IMR-90 (cell line): ENCODE measurements at regions of chr18 and their contacts with region 1.

Region 1: GRCh38 chr18:34787931-34788532 is 77.9 kb downstream of the DTNA start:
- DNase-seq: peak; percentile 69
- ATAC-seq: peak; percentile 64; the same call in 1 of the 2 replicates
- H3K4me3 ChIP-seq: no peak overlapping the region
- H3K27ac ChIP-seq: no peak overlapping the region
- H3K4me1 ChIP-seq: peaks cover 7% of the 10 kb centered on the region; the same call in 1 of the 2 replicates
- H3K27me3 ChIP-seq: no peaks in the 10 kb centered on the region
- CTCF ChIP-seq: peak; percentile 74
- POLR2A ChIP-seq: no peak
- RAD21 ChIP-seq: peak; percentile 90

Region 2: DNA sequence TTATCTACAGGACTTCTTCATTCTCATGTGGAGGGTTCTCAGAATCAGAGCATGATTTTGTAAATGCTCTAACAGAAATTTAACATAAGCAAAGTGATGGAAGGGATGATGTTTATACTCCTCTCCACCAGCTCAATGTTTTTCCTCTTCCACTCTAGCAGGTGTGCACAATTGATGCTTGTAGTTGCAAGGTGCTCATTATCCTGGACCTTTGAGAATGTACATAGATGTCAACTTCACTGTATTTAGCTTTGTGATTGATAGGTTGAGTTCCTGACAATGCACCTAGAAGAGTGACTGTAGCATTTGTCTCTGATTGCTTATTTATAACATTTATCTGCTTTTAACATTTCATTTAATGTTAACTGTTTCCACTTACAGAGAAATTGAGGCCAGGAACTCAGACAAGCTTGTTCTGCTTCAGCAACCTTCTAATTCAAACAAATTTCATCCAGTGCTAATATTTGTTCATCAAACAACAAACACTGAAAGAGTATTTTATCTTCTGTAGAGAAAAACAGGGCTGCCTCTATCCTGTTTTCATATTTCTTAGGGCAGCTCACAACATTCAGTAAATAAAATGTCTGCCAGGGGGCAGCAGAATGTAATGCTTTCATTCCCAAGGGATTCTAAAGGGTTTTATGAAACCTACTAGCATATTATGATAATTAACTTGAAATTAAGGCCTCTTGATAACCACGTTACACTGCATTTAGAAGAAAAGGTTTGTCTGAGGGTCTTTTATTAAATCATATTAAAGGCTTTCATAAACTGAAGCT is 435.5 kb before region 1 on chr18:
- CTCF ChIA-PET with region 1: no interaction called
- POLR2A ChIA-PET with region 1: no interaction called
- dilution Hi-C with region 1: no loop called
- in situ Hi-C with region 1: no loop called
- intact Hi-C with region 1: loop called (anchors 5 kb)
- DNase-seq: no peak
- ATAC-seq: no peak
- H3K4me3 ChIP-seq: no peak overlapping the region
- H3K27ac ChIP-seq: no peak overlapping the region
- H3K4me1 ChIP-seq: no peaks in the 10 kb centered on the region
- H3K27me3 ChIP-seq: no peaks in the 10 kb centered on the region
- CTCF ChIP-seq: 0 out of 2 replicates have a peak, but pooled peaks have one; percentile 8
- POLR2A ChIP-seq: no peak
- RAD21 ChIP-seq: no peak

Region 3: DNA sequence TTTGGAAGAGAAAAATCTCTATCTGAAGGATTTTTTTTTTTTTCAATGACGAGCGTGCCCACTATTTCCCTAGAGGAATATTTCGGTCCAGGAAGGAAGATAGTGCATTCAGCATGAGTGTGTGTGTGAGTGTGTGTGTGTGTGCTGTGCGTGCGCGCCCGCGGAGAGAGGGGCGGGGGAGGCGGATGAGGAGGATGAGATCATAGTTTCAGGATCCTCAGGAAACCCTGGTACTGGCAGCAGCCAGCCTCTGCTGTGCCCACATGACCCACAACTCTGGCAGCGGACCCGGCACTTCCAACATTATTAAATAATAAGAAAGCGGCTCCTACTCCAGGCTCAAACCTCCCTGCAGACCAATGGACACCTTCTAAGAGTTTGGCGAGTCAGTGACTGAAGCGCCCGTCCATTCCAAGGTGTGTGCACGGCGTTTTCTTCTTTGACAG is 294.9 kb before region 1 on chr18:
- CTCF ChIA-PET with region 1: no interaction called
- POLR2A ChIA-PET with region 1: no interaction called
- dilution Hi-C with region 1: no loop called
- in situ Hi-C with region 1: no loop called
- intact Hi-C with region 1: loop called (anchors 5 kb)
- DNase-seq: peak; percentile 58
- ATAC-seq: peak; percentile 87
- H3K4me3 ChIP-seq: peak overlapping the region; percentile 44
- H3K27ac ChIP-seq: no peak overlapping the region
- H3K4me1 ChIP-seq: no peaks in the 10 kb centered on the region
- H3K27me3 ChIP-seq: peaks cover 11% of the 10 kb centered on the region
- CTCF ChIP-seq: no peak
- POLR2A ChIP-seq: no peak
- RAD21 ChIP-seq: no peak

Region 4: DNA sequence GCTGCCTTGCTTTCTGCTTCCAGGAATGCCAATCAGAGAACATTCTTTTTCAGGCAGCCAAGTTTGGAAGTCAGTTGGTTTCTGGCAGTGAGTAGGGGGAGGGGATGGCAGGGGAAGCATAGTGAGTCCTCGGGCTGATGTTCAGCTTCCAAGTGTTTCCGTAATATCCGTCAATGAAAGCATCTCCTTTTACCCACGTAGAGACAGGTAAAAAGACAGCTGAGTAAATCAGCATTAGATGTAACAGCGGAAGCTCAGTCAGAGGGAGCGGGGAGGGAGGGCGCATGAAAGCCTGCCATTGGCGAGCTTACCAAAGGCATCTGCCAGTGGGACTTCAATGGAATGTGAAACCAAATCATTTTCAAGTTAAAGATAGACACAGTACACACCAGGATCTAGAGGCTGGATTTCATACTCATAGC is 195.1 kb before region 1 on chr18:
- CTCF ChIA-PET with region 1: interaction called, 3 read pairs
- POLR2A ChIA-PET with region 1: no interaction called
- dilution Hi-C with region 1: no loop called
- in situ Hi-C with region 1: no loop called
- intact Hi-C with region 1: loop called (anchors 1 kb)
- DNase-seq: peak; percentile 59
- ATAC-seq: peak; percentile 98
- H3K4me3 ChIP-seq: peak overlapping the region; percentile 40
- H3K27ac ChIP-seq: peak overlapping the region; percentile 12; the same call in 1 of the 2 replicates
- H3K4me1 ChIP-seq: peaks cover 4% of the 10 kb centered on the region
- H3K27me3 ChIP-seq: peaks cover 3% of the 10 kb centered on the region
- CTCF ChIP-seq: no peak
- POLR2A ChIP-seq: no peak
- RAD21 ChIP-seq: no peak

Region 5: DNA sequence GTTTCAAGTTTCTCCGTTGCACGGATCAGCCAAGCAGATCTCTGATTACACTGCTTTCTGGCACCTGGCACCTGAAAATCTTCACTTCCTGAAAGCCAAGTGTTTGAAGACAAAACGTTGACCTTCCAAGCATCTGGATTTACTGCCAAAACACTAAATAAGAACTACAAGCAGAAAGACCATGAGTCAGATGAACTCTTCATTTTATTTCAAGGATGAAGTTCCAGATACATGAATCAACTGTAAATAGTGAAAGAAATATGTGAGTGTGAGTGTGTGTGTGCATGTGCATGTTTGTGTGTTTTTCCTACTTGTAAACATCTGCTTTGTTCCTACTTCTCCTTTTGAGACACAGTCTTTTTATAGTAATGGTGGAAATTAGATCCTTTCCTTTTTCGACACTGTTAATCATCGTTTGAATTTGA is 137.9 kb before region 1 on chr18:
- CTCF ChIA-PET with region 1: no interaction called
- POLR2A ChIA-PET with region 1: no interaction called
- dilution Hi-C with region 1: no loop called
- in situ Hi-C with region 1: no loop called
- intact Hi-C with region 1: no loop called
- DNase-seq: peak; percentile 88
- ATAC-seq: peak; percentile 85
- H3K4me3 ChIP-seq: no peak overlapping the region
- H3K27ac ChIP-seq: peak overlapping the region; percentile 66; the same call in 1 of the 2 replicates
- H3K4me1 ChIP-seq: peaks cover 4% of the 10 kb centered on the region; the same call in 1 of the 2 replicates
- H3K27me3 ChIP-seq: no peaks in the 10 kb centered on the region
- CTCF ChIP-seq: no peak
- POLR2A ChIP-seq: no peak
- RAD21 ChIP-seq: no peak

Region 6: GRCh38 chr18:35005963-35006577 is 218.0 kb after region 1 on chr18:
- CTCF ChIA-PET with region 1: no interaction called
- POLR2A ChIA-PET with region 1: no interaction called
- dilution Hi-C with region 1: no loop called
- in situ Hi-C with region 1: no loop called
- intact Hi-C with region 1: no loop called
- DNase-seq: peak; percentile 70
- ATAC-seq: peak; percentile 88
- H3K4me3 ChIP-seq: no peak overlapping the region
- H3K27ac ChIP-seq: no peak overlapping the region
- H3K4me1 ChIP-seq: no peaks in the 10 kb centered on the region
- H3K27me3 ChIP-seq: no peaks in the 10 kb centered on the region
- CTCF ChIP-seq: peak; percentile 70
- POLR2A ChIP-seq: no peak
- RAD21 ChIP-seq: peak; percentile 90

Region 7: GRCh38 chr18:35348001-35348400 is 560.0 kb after region 1 on chr18:
- CTCF ChIA-PET with region 1: no interaction called
- POLR2A ChIA-PET with region 1: no interaction called
- dilution Hi-C with region 1: no loop called
- in situ Hi-C with region 1: no loop called
- intact Hi-C with region 1: no loop called
- DNase-seq: no peak
- ATAC-seq: no peak
- H3K4me3 ChIP-seq: no peak overlapping the region
- H3K27ac ChIP-seq: no peak overlapping the region
- H3K4me1 ChIP-seq: peaks cover 2% of the 10 kb centered on the region; the same call in 1 of the 2 replicates
- H3K27me3 ChIP-seq: no peaks in the 10 kb centered on the region
- CTCF ChIP-seq: no peak
- POLR2A ChIP-seq: no peak
- RAD21 ChIP-seq: no peak